Activated T-helper 2 cell treated with anti-CD3 and anti-CD28 coated beads, Interferon-gamma antibody, Interleukin-2, Interleukin-4, amounts not matched to agents 10 μg/mL and 5 μg/mL and 100 μg/mL, durations not matched to agents 14 hours and 24 hours and 36 hours (primary cell): ENCODE measurements at regions of chr7 and their contacts with region 1.

Region 1: GRCh38 chr7:114916261-114916892 is 5.5 kb upstream of the MDFIC start:
- DNase-seq: no peak
- H3K4me3 Mint-ChIP-seq: peak overlapping the region; percentile 58
- H3K27ac Mint-ChIP-seq: peak overlapping the region; percentile 98
- H3K4me1 Mint-ChIP-seq: peaks cover 47% of the 10 kb centered on the region
- H3K27me3 Mint-ChIP-seq: no peaks in the 10 kb centered on the region

Region 2: GRCh38 chr7:114715907-114716306 is 200.5 kb before region 1 on chr7:
- intact Hi-C with region 1: loop called (anchors 5 kb)
- DNase-seq: no peak
- H3K4me3 Mint-ChIP-seq: no peak overlapping the region
- H3K27ac Mint-ChIP-seq: peak overlapping the region; percentile 0
- H3K4me1 Mint-ChIP-seq: peaks cover 16% of the 10 kb centered on the region
- H3K27me3 Mint-ChIP-seq: no peaks in the 10 kb centered on the region

Region 3: GRCh38 chr7:114799628-114800028 is 116.7 kb before region 1 on chr7:
- intact Hi-C with region 1: loop called (anchors 1 kb)
- DNase-seq: no peak
- H3K4me3 Mint-ChIP-seq: no peak overlapping the region
- H3K27ac Mint-ChIP-seq: peak overlapping the region; percentile 95
- H3K4me1 Mint-ChIP-seq: peaks cover 58% of the 10 kb centered on the region
- H3K27me3 Mint-ChIP-seq: no peaks in the 10 kb centered on the region

Region 4: GRCh38 chr7:114889646-114890285 is 26.6 kb before region 1 on chr7:
- intact Hi-C with region 1: loop called (anchors 1 kb)
- DNase-seq: no peak
- H3K4me3 Mint-ChIP-seq: no peak overlapping the region
- H3K27ac Mint-ChIP-seq: peak overlapping the region; percentile 84
- H3K4me1 Mint-ChIP-seq: peaks cover 40% of the 10 kb centered on the region
- H3K27me3 Mint-ChIP-seq: no peaks in the 10 kb centered on the region

Region 5: GRCh38 chr7:114930829-114931655 is 14.7 kb after region 1 on chr7:
- intact Hi-C with region 1: loop called (anchors 2 kb)
- DNase-seq: no peak
- H3K4me3 Mint-ChIP-seq: peak overlapping the region; percentile 79
- H3K27ac Mint-ChIP-seq: no peak overlapping the region
- H3K4me1 Mint-ChIP-seq: peaks cover 25% of the 10 kb centered on the region
- H3K27me3 Mint-ChIP-seq: no peaks in the 10 kb centered on the region

Region 6: DNA sequence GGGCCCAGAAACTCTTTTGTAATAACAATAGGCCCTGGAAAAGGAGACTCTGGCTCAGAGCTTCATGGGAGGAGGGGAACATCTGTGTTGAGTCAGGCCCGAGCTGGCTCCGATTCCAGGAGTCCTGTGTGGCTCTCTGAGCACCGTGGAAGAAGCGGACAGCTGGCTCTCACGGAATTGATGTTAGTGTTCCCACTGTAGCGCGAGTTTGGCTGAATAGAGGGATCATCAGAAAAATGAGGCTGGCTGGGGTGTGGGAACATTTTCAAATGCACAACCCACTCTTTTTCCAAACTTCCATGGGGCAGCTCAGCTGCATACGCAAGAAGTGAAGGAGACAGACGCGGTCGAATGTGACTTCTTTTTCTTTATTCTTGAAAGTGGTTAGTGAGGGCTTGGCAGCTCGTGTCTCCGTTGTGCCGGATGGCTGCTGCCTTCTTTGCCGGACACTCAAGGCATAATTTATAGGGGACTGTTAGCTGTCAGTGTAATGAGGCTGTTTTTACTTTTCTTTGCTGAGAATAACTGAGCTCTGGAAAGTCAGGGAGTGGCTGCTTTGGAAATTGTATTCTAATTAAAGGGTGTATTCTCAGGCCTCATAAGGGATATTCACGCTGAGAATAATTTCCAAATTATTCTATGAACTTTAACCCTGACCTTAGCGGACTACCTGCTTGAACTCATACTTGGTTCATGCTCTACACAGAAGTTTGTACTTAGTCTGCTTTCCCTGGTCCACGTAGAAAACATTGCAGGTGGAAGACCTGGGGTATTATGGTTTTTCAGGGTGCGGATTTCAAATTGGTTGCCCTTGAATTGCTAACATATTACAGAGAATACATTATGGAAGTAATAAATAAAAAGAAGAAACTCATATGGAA is 28.6 kb after region 1 on chr7:
- intact Hi-C with region 1: no loop called
- DNase-seq: no peak
- H3K4me3 Mint-ChIP-seq: no peak overlapping the region
- H3K27ac Mint-ChIP-seq: no peak overlapping the region
- H3K4me1 Mint-ChIP-seq: peaks cover 64% of the 10 kb centered on the region
- H3K27me3 Mint-ChIP-seq: no peaks in the 10 kb centered on the region

Region 7: DNA sequence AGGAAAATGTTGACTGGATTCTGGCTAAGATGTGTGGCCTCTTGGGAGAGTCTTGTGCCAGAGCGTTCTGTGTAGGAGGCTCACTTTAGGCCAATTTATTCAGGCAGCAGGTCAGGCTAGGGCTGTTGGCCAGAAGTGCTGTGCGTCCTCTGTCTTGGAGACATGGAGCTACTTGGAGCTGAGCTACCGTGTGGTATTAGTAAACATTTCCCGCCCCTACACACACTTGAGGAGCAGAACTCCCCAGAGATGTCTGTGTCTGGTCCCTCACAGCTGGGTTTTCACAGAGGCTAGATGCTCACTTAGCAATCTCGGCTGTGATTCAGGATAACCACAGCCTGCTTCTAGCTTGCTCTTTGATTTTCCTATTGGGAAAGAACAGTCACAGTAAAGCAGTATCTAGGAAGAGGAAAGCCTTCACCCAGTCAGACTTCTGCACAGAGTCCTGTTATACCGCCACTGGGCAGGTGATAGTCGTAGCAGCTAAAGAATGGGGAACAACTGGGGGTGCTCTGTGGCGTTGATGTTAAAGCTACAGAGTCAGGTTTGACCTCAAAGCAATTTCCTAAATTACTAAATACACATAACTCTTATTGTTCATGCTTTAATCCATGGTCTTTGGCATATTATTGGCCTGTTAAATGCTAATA is 92.2 kb after region 1 on chr7:
- intact Hi-C with region 1: loop called (anchors 1 kb)
- DNase-seq: no peak
- H3K4me3 Mint-ChIP-seq: peak overlapping the region; percentile 38
- H3K27ac Mint-ChIP-seq: peak overlapping the region; percentile 79
- H3K4me1 Mint-ChIP-seq: peaks cover 78% of the 10 kb centered on the region
- H3K27me3 Mint-ChIP-seq: no peaks in the 10 kb centered on the region